BJ (cell line): ENCODE measurements at regions of chr17 and their contacts with region 1.

Region 1: DNA sequence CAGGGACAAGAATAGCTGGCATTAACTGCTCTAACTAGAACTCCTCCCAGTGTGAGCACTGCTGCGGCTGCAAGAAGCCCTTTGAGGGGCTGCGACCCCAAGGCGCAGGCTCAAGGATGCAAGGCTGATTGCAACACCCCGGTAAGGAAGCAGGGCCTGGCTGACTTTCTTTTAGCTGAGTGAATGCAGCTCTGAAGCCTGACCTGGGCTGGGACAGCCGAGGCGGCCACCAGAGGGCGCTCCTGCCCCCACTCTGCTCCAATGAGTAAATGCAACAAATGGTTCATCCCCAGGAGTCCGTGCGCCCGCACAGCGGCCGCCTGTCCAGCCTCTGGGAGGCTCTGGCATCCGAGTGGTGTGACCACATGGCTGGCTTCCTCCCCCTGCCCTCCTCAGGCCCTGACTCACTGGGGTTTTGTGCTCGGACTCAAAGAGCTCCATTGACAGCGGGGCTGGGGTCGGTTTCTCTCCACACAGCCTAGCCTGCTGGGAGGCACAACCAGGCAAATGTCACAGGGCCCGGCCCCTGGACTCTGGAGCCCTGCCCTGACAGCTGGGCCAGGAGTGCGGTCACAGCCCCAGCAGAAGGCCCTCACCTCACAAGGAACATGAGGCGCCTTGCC is at the start of gene SMIM5:
- DNase-seq: peak; percentile 45
- H3K4me3 ChIP-seq: no peak within 1 kb of the TSS
- H3K27me3 ChIP-seq: no peaks in the 10 kb centered on the region
- CTCF ChIP-seq: peak; percentile 96
- polyA plus RNA-seq, gene SMIM5: 0.10 TPM in 1 of 2 replicates, not detected in the other

Region 2: GRCh38 chr17:75345514-75346167 is 287.3 kb before region 1 on chr17:
- CTCF ChIA-PET with region 1: no interaction called
- POLR2A ChIA-PET with region 1: no interaction called
- DNase-seq: no peak
- H3K4me3 ChIP-seq: no peak overlapping the region
- H3K27me3 ChIP-seq: no peaks in the 10 kb centered on the region
- CTCF ChIP-seq: no peak

Region 3: DNA sequence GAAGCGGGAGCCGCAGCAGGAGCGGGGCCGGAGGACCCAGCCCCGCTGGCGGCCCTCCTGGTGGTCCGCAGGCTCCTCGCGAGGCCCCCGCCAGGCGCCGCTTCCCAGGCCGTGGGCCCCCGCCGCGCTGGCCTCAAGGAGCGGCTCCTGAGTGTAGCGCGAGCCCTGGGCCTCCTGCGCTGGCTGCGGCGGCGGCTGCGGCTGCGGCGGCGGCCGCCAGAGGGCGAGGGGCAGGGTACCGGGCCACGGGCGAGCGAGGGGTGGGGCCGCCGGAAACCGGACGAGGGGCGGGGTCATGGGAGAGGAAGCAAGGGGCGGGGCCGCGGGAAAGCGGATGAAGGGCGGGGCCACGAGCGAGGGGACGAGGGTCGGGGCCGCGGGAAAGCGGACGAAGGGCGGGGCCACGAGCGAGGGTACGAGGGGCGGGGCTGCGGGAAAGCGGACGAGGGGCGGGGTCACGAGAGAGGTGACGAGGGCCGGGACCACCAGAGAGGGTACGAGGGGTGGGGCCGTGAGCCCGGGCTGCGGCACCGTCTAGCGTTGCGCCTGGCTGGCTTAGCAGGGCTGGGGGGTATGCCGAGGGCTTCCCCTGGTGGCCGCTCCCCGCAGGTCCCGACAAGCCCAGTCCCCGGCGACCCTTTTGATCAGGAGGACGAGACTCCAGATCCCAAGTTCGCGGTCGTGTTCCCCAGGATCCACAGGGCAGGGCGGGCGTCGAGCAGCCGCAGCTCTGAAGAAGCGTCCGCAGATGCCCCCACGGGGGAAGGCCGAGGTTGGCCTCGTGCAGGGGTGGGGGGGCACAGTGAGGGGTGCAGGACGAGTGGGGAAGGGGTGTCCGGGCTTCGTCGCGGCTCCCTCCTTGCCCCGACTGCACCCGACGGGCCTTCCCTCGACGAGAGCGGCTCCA is 43.7 kb before region 1 on chr17:
- CTCF ChIA-PET with region 1: interaction called, 10 read pairs
- POLR2A ChIA-PET with region 1: no interaction called
- DNase-seq: no peak
- H3K4me3 ChIP-seq: peak overlapping the region; percentile 54
- H3K27me3 ChIP-seq: peaks cover 18% of the 10 kb centered on the region
- CTCF ChIP-seq: peak; percentile 41

Region 4: GRCh38 chr17:75619506-75620431 is 13.2 kb before region 1 on chr17:
- CTCF ChIA-PET with region 1: interaction called, 46 read pairs
- POLR2A ChIA-PET with region 1: no interaction called
- DNase-seq: no peak
- H3K4me3 ChIP-seq: no peak overlapping the region
- H3K27me3 ChIP-seq: no peaks in the 10 kb centered on the region; the same call in 1 of the 2 replicates
- CTCF ChIP-seq: peak; percentile 63

Region 5: DNA sequence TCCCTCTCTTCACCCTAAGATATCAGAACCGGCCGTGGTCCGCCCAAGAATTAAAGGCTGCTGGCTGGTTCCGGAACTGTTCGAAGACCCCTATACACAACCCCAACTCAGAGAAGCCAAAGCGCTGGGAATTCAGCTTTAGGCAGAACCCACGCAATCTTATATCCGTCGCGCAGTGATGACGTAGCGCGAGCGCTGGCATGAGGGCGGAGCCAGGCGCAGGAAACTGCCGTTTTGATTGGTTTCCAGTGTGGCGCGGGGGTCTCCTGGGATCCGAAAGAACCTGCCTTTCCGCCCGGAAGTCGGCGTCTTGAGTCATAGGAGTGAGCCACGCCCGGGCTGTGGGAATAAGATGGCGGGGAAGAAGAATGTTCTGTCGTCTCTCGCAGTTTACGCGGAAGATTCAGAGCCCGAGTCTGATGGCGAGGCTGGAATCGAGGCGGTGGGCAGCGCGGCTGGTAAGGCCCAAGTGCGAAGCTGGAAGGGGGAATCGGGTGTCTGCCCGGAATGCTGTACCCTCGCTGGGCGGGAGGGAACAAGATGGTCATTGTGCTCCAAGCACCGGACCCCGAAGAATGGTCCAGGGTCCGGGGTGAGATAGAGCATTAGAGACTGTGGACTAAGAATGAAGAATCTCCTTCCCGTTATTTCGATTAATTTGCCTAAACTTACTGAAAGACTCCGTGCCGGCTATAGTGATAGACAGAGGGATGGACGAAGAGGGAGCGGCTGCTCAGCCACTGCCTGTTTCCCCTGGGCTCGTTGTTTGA is 34.2 kb after region 1 on chr17 and contains the starts of genes RECQL5 and SAP30BP:
- CTCF ChIA-PET with region 1: interaction called, 31 read pairs
- POLR2A ChIA-PET with region 1: no interaction called
- DNase-seq: peak; percentile 88
- H3K4me3 ChIP-seq: peak within 1 kb of the TSS; percentile 73
- H3K27me3 ChIP-seq: no peaks in the 10 kb centered on the region
- CTCF ChIP-seq: no peak
- polyA plus RNA-seq, gene RECQL5: 8.2 and 14.2 TPM in 2 replicates
- polyA plus RNA-seq, gene SAP30BP: 65.3 and 84.8 TPM in 2 replicates

Region 6: GRCh38 chr17:75684924-75685323 is 52.0 kb after region 1 on chr17:
- CTCF ChIA-PET with region 1: interaction called, 14 read pairs
- POLR2A ChIA-PET with region 1: no interaction called
- DNase-seq: peak; percentile 78
- H3K4me3 ChIP-seq: no peak overlapping the region
- H3K27me3 ChIP-seq: no peaks in the 10 kb centered on the region
- CTCF ChIP-seq: no peak

Region 7: GRCh38 chr17:75764711-75765421 is 131.9 kb after region 1 on chr17 and contains the start of gene GALK1:
- CTCF ChIA-PET with region 1: interaction called, 19 read pairs
- POLR2A ChIA-PET with region 1: no interaction called
- DNase-seq: no peak
- H3K4me3 ChIP-seq: peak within 1 kb of the TSS; percentile 78
- H3K27me3 ChIP-seq: no peaks in the 10 kb centered on the region
- CTCF ChIP-seq: peak; percentile 71
- polyA plus RNA-seq, gene GALK1: 19.9 and 35.8 TPM in 2 replicates